ENCODE measurements at regions of chr1 and their contacts with region 1.

Region 1: GRCh38 chr1:183915625-183916510 is 110.9 kb downstream of the RGL1 start:
- DNase-seq: peak in 8 of 10 donors; percentile 65 to 82 (median 72)
- H3K4me3 ChIP-seq: peak overlapping the region in 17 of 59 donors; percentile 4 to 44 (median 21)
- H3K27ac ChIP-seq: peak overlapping the region; percentile 20 to 100 (median 96)
- H3K27me3 ChIP-seq: no peaks in the 10 kb centered on the region
- CTCF ChIP-seq: peak; percentile 88 to 100 (median 95)

Region 2: GRCh38 chr1:183590244-183591191 is 325.4 kb before region 1 on chr1 and contains the start of gene NCF2:
- intact Hi-C with region 1: no loop called
- DNase-seq: no peak
- H3K4me3 ChIP-seq: peak within 1 kb of the TSS in 22 of 59 donors; percentile 2 to 41 (median 23)
- H3K27ac ChIP-seq: peak within 1 kb of the TSS in 42 of 59 donors; percentile 7 to 83 (median 60)
- H3K27me3 ChIP-seq: no peaks in the 10 kb centered on the region
- CTCF ChIP-seq: no peak
- total RNA-seq, gene NCF2: 1.1 to 14.5 (median 3.5) TPM

Region 3: DNA sequence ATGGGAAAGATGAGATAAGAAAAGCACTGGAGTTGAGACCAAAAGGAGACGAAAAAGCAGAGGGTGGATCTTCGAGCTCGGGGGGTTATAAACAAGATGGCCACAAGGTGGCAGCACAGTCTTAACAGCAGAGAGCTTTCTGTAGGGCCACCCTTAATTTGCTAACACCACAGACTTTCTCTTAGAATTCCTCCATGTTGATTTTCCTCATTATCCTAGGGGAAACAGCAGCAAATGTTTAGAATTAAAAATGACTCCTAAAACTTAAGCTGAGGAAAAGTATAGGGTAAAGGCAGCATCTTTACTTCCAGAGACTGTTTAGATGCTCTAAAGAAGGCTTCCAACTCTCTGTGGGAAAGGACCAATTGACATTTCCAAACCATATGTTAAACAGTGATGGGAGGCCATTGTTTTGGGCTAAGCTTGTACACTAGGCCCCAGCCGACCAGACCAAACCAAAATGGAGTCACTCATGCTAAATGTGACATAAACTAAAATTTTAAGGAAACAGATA is 260.2 kb before region 1 on chr1:
- intact Hi-C with region 1: loop called (anchors 1 kb)
- DNase-seq: peak; percentile 76 to 91 (median 82)
- H3K4me3 ChIP-seq: peak overlapping the region in 3 of 59 donors; percentile 9 to 13 (median 12)
- H3K27ac ChIP-seq: peak overlapping the region in 39 of 59 donors; percentile 3 to 78 (median 51)
- H3K27me3 ChIP-seq: no peaks in the 10 kb centered on the region
- CTCF ChIP-seq: peak; percentile 83 to 99 (median 96)

Region 4: DNA sequence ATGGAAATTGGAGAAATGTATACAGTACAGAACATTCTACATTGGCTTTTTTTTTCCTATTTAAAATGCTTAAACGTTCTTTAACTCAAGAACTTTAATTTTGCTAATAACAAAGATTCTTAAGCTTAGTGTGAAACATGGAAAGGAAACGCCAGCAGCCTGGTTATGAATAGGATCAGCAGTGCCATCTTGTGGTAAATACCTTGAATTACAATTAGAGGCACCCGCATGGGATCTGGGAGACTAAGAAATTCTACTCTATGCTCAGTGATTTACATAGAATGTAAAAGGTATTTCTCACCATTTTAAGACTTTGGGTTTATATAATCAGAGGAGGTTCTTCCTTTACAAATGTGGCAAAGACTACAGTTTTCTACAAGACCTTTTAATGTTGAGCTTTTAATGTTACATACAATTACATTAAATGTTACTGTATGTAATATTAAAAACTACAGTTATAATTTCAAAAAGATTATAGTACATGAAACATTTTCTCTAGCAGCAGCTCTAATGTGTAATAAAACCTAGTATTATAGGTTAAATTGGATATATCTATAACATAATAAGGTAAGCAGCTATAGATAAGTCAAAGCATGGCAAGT is 230.7 kb before region 1 on chr1:
- intact Hi-C with region 1: loop called in 1 of 2 experiments (anchors 10 kb)
- DNase-seq: no peak
- H3K4me3 ChIP-seq: no peak overlapping the region
- H3K27ac ChIP-seq: no peak overlapping the region
- H3K27me3 ChIP-seq: no peaks in the 10 kb centered on the region
- CTCF ChIP-seq: peak; percentile 46 to 86 (median 71)

Region 5: DNA sequence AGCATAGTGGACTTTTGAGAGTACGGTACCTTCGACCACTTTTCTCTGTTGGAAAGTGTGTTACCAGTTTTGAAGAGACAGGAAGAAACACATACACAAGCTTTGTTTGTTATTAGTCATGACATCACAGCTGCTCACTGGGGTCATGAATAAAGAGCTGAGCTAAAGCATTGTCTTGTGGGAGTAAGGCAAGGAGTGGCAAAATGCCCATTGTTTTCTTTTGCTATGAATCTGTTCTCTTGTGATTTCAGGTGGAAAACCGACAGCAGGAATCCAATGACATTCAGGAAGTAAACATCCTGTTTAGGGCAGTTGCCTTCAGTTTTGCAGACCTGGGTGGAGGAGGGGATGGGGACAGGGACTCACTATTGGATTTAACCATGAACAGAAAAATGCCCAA is 44.7 kb before region 1 on chr1:
- intact Hi-C with region 1: loop called in 1 of 2 experiments (anchors 5 kb)
- DNase-seq: peak in 1 of 10 donors; percentile 37
- H3K4me3 ChIP-seq: peak overlapping the region in 18 of 59 donors; percentile 1 to 42 (median 20)
- H3K27ac ChIP-seq: peak overlapping the region; percentile 65 to 98 (median 94)
- H3K27me3 ChIP-seq: no peaks in the 10 kb centered on the region
- CTCF ChIP-seq: no peak

Region 6: GRCh38 chr1:184110272-184111204 is 194.7 kb after region 1 on chr1:
- intact Hi-C with region 1: no loop called
- DNase-seq: no peak
- H3K4me3 ChIP-seq: no peak overlapping the region
- H3K27ac ChIP-seq: no peak overlapping the region
- H3K27me3 ChIP-seq: no peaks in the 10 kb centered on the region
- CTCF ChIP-seq: no peak